CD4-positive, alpha-beta memory T cell (primary cell): ENCODE measurements at regions of chr11 and their contacts with region 1.

Region 1: DNA sequence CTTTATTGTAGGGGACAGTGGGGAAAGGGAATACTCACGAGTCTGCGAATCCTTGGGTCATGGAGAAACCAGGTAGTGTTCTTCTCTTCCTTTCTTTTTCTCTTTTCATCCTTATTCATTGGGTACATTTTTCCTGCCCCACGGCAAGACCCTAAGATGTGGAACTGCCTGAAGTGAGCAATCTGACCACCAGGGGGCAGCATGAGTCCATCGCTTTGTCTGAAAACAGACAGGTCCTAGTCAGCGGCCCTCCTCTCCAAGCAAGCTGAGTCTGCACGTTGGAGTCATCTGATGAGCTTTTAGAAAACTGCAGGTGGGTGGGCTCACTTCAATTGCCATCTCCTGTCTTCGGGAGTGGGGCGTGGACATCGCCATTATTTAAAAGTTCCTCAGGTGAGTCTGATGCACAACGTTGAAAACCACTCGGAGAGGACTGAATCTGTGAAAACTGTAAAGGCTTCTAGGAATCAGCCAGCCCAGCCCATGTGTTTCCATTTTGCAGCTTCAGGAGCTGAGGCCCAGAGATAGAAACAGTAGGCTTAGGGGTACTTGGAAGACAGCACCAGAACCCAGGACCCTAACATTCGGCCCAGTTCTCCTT is 34.0 kb upstream of the FBXO3 start:
- DNase-seq: peak; percentile 68 to 77 (median 74)
- H3K4me3 ChIP-seq: no peak overlapping the region
- H3K4me3 Mint-ChIP-seq: no peak overlapping the region
- H3K27ac ChIP-seq: no peak overlapping the region
- H3K27ac Mint-ChIP-seq: no peak overlapping the region
- H3K4me1 ChIP-seq: no peaks in the 10 kb centered on the region
- H3K4me1 Mint-ChIP-seq: peaks cover 0 to 2% (median under 1%) of the 10 kb centered on the region in 4 donors
- H3K27me3 ChIP-seq: no peaks in the 10 kb centered on the region
- H3K27me3 Mint-ChIP-seq: peaks cover 10 to 11% of the 10 kb centered on the region in 2 donors

Region 2: GRCh38 chr11:33515347-33515746 is 293.0 kb before region 1 on chr11:
- CTCF ChIA-PET with region 1: no interaction called
- POLR2A ChIA-PET with region 1: no interaction called
- intact Hi-C with region 1: no loop called
- DNase-seq: no peak
- H3K4me3 ChIP-seq: no peak overlapping the region
- H3K4me3 Mint-ChIP-seq: no peak overlapping the region
- H3K27ac ChIP-seq: no peak overlapping the region
- H3K27ac Mint-ChIP-seq: no peak overlapping the region
- H3K4me1 ChIP-seq: no peaks in the 10 kb centered on the region
- H3K4me1 Mint-ChIP-seq: no peaks in the 10 kb centered on the region
- H3K27me3 ChIP-seq: no peaks in the 10 kb centered on the region
- H3K27me3 Mint-ChIP-seq: peaks cover 17 to 18% of the 10 kb centered on the region in 2 donors

Region 3: GRCh38 chr11:33790040-33790439 is 18.3 kb before region 1 on chr11:
- CTCF ChIA-PET with region 1: interaction called, 20 read pairs
- POLR2A ChIA-PET with region 1: no interaction called
- intact Hi-C with region 1: no loop called
- DNase-seq: no peak
- H3K4me3 ChIP-seq: no peak overlapping the region
- H3K4me3 Mint-ChIP-seq: no peak overlapping the region
- H3K27ac ChIP-seq: no peak overlapping the region
- H3K27ac Mint-ChIP-seq: no peak overlapping the region
- H3K4me1 ChIP-seq: no peaks in the 10 kb centered on the region
- H3K4me1 Mint-ChIP-seq: no peaks in the 10 kb centered on the region
- H3K27me3 ChIP-seq: peaks cover 8% of the 10 kb centered on the region
- H3K27me3 Mint-ChIP-seq: peaks cover 31 to 33% of the 10 kb centered on the region in 2 donors

Region 4: DNA sequence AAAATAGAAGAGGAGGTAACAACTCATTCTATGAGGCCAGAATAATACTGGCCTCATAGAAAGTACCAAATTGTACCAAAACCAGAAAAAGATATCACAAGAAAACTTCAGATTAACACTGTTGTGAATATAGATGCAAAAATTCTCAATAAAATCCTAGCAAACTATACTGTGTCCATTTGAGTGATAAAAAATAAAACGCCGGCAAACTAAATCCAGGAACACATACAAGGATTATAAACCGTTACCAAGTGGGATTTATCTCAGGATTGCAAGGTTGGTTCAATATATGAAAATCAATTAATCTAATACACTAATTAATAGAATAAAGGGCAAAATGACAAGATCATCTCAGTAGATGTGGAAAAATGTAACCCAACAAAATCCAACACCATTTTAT is 10.4 kb before region 1 on chr11:
- CTCF ChIA-PET with region 1: interaction called, 20 read pairs
- POLR2A ChIA-PET with region 1: no interaction called
- intact Hi-C with region 1: no loop called
- DNase-seq: no peak
- H3K4me3 ChIP-seq: no peak overlapping the region
- H3K4me3 Mint-ChIP-seq: no peak overlapping the region
- H3K27ac ChIP-seq: no peak overlapping the region
- H3K27ac Mint-ChIP-seq: no peak overlapping the region
- H3K4me1 ChIP-seq: peaks cover 5% of the 10 kb centered on the region
- H3K4me1 Mint-ChIP-seq: peaks cover 7 to 10% (median 9%) of the 10 kb centered on the region in 4 donors
- H3K27me3 ChIP-seq: peaks cover 38% of the 10 kb centered on the region
- H3K27me3 Mint-ChIP-seq: peaks cover 53 to 58% of the 10 kb centered on the region in 2 donors

Region 5: GRCh38 chr11:33819278-33819677 is 10.9 kb after region 1 on chr11:
- CTCF ChIA-PET with region 1: interaction called, 38 read pairs
- POLR2A ChIA-PET with region 1: no interaction called
- intact Hi-C with region 1: no loop called
- DNase-seq: no peak
- H3K4me3 ChIP-seq: no peak overlapping the region
- H3K4me3 Mint-ChIP-seq: no peak overlapping the region
- H3K27ac ChIP-seq: no peak overlapping the region
- H3K27ac Mint-ChIP-seq: no peak overlapping the region
- H3K4me1 ChIP-seq: no peaks in the 10 kb centered on the region
- H3K4me1 Mint-ChIP-seq: no peaks in the 10 kb centered on the region
- H3K27me3 ChIP-seq: no peaks in the 10 kb centered on the region
- H3K27me3 Mint-ChIP-seq: peaks cover 17 to 20% of the 10 kb centered on the region in 2 donors

Region 6: DNA sequence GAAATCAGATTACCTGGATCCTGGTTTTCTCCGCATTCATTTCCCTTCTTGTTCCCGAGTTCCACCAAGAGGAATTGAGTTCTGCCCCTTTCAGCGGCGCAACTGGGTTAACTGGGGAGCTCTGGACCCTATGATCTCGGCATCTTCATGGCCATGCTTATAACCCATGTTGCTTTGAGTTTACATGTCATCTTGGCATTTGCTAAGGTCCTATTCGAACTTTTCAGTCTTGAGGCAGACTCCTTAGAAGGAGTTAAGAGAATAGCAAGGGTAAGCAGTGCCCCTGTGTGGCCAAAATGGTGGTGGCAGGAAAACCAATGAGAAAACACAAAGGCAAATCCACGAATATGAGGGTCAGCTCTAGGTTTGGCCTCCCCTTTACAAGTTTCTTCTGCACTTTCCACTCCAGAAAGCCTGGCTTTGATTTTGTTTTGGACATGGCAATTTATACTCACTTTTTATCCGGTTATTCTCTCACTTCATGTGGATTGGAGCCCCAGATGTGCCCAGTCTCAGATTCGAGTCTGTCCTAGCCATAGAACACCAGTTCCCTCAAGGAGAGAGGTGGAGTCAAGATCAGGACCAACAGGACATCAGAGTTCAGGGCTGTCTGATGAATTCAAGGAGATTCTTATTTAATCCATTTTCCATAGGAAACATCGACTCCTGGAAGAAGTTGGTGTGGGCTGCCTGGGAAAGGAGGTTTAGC is 21.3 kb after region 1 on chr11:
- CTCF ChIA-PET with region 1: interaction called, 51 read pairs
- POLR2A ChIA-PET with region 1: no interaction called
- intact Hi-C with region 1: loop called (anchors 1 kb)
- DNase-seq: peak; percentile 50 to 62 (median 53)
- H3K4me3 ChIP-seq: no peak overlapping the region
- H3K4me3 Mint-ChIP-seq: peak overlapping the region; percentile 34 to 88 (median 81)
- H3K27ac ChIP-seq: no peak overlapping the region
- H3K27ac Mint-ChIP-seq: no peak overlapping the region
- H3K4me1 ChIP-seq: peaks cover 5% of the 10 kb centered on the region
- H3K4me1 Mint-ChIP-seq: peaks cover 3 to 8% (median 6%) of the 10 kb centered on the region in 4 donors
- H3K27me3 ChIP-seq: peaks cover 19% of the 10 kb centered on the region
- H3K27me3 Mint-ChIP-seq: peaks cover 46 to 48% of the 10 kb centered on the region in 2 donors

Region 7: GRCh38 chr11:33874910-33875490 is 66.7 kb after region 1 on chr11:
- CTCF ChIA-PET with region 1: no interaction called
- POLR2A ChIA-PET with region 1: no interaction called
- intact Hi-C with region 1: no loop called
- DNase-seq: no peak
- H3K4me3 ChIP-seq: no peak overlapping the region
- H3K4me3 Mint-ChIP-seq: no peak overlapping the region
- H3K27ac ChIP-seq: no peak overlapping the region
- H3K27ac Mint-ChIP-seq: no peak overlapping the region
- H3K4me1 ChIP-seq: peaks cover 7% of the 10 kb centered on the region
- H3K4me1 Mint-ChIP-seq: peaks cover 1 to 11% (median 4%) of the 10 kb centered on the region in 4 donors
- H3K27me3 ChIP-seq: peaks cover 12% of the 10 kb centered on the region
- H3K27me3 Mint-ChIP-seq: peaks cover 48 to 59% of the 10 kb centered on the region in 2 donors

Region 8: GRCh38 chr11:33987975-33988580 is 179.8 kb after region 1 on chr11:
- CTCF ChIA-PET with region 1: interaction called, 21 read pairs
- POLR2A ChIA-PET with region 1: no interaction called
- intact Hi-C with region 1: loop called (anchors 1 kb)
- DNase-seq: peak; percentile 61 to 73 (median 67)
- H3K4me3 ChIP-seq: no peak overlapping the region
- H3K4me3 Mint-ChIP-seq: no peak overlapping the region
- H3K27ac ChIP-seq: no peak overlapping the region
- H3K27ac Mint-ChIP-seq: no peak overlapping the region
- H3K4me1 ChIP-seq: peaks cover 6% of the 10 kb centered on the region
- H3K4me1 Mint-ChIP-seq: peaks cover 3 to 7% (median 5%) of the 10 kb centered on the region in 4 donors
- H3K27me3 ChIP-seq: no peaks in the 10 kb centered on the region
- H3K27me3 Mint-ChIP-seq: peaks cover 1 to 8% of the 10 kb centered on the region in 2 donors